GM12878 (cell line): ENCODE measurements at regions of chr7 and their contacts with region 1.

Region 1: DNA sequence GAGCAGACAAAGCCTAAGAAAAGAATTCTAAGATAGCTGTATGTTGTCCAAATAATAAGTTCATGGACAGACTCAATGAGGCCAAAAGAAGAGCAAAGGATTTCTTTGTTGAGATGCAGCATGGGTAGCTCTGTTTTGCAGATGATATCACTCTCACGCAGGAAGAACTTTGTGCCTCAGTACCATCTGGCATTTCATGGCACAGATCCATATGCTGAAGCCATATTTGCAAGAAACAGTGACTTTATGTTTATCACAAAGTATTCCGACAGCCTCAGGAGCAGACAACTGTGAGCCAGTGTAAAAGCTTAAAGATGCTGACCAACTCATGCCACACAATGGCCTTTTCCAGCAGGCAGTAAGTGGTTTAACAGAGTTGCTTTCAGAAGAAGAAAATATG is 45.5 kb upstream of the RNF148 start:
- DNase-seq: no peak
- ATAC-seq: no peak
- H3K4me3 ChIP-seq: no peak overlapping the region
- H3K27ac ChIP-seq: no peak overlapping the region
- H3K4me1 ChIP-seq: no peaks in the 10 kb centered on the region
- H3K27me3 ChIP-seq: no peaks in the 10 kb centered on the region
- CTCF ChIP-seq: no peak
- EP300 ChIP-seq: no peak
- POLR2A ChIP-seq: no peak
- RAD21 ChIP-seq: no peak

Region 2: DNA sequence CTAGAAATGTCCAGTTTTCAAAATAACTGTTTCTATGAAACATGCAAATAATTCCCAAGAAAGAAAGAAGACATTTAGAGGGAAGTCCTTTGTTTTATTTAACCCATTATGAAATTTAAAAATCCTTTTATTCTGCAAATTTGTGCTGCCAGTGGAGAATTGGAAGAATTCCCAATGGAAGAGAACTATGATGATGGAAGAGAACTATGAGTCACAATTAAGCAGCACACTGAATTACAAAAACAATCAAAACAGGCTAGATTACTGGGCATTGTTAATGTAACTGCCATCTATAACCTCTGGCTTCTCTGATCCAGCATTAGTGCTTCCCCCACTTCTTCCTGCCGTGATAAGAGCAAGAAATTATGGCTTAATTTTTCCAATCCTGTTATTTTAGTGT is 317.5 kb before region 1 on chr7:
- CTCF ChIA-PET with region 1: no interaction called
- POLR2A ChIA-PET with region 1: no interaction called
- RAD21 ChIA-PET with region 1: no interaction called
- SMC1A ChIA-PET with region 1: no interaction called
- in situ Hi-C with region 1: no loop called
- intact Hi-C with region 1: no loop called
- DNase-seq: no peak
- ATAC-seq: no peak
- H3K4me3 ChIP-seq: no peak overlapping the region
- H3K27ac ChIP-seq: no peak overlapping the region
- H3K4me1 ChIP-seq: no peaks in the 10 kb centered on the region
- H3K27me3 ChIP-seq: no peaks in the 10 kb centered on the region
- CTCF ChIP-seq: no peak
- EP300 ChIP-seq: no peak
- POLR2A ChIP-seq: no peak
- RAD21 ChIP-seq: no peak

Region 3: DNA sequence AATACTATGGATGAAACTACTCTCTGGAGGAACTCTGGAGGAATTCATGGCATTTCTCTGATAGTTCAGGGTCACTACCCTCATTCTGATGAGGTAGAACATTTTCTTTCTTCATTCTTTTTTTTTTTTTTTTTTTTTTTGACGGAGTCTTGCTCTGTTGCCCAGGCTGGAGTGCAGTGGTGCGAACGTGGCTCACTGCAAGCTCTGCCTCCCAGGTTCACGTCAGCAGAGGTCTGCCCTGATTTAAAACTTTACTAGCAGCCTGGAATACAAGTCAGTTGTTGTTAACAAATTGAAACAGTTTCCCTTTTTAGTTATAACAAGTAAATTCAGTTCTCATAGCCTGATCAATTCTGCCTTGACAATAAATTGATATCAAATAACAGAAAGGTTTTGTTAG is 267.1 kb before region 1 on chr7:
- CTCF ChIA-PET with region 1: no interaction called
- POLR2A ChIA-PET with region 1: no interaction called
- RAD21 ChIA-PET with region 1: no interaction called
- SMC1A ChIA-PET with region 1: no interaction called
- in situ Hi-C with region 1: no loop called
- intact Hi-C with region 1: no loop called
- DNase-seq: no peak
- ATAC-seq: no peak
- H3K4me3 ChIP-seq: no peak overlapping the region
- H3K27ac ChIP-seq: no peak overlapping the region
- H3K4me1 ChIP-seq: no peaks in the 10 kb centered on the region
- H3K27me3 ChIP-seq: no peaks in the 10 kb centered on the region
- CTCF ChIP-seq: no peak
- EP300 ChIP-seq: no peak
- POLR2A ChIP-seq: no peak
- RAD21 ChIP-seq: no peak

Region 4: GRCh38 chr7:122736183-122736582 is 12.0 kb before region 1 on chr7:
- CTCF ChIA-PET with region 1: interaction called, 11 read pairs
- POLR2A ChIA-PET with region 1: interaction called, 6 read pairs
- RAD21 ChIA-PET with region 1: interaction called, 7 read pairs
- SMC1A ChIA-PET with region 1: interaction called, 85 read pairs
- in situ Hi-C with region 1: no loop called
- intact Hi-C with region 1: no loop called
- DNase-seq: no peak
- ATAC-seq: peak; percentile 83
- H3K4me3 ChIP-seq: no peak overlapping the region
- H3K27ac ChIP-seq: no peak overlapping the region
- H3K4me1 ChIP-seq: no peaks in the 10 kb centered on the region
- H3K27me3 ChIP-seq: no peaks in the 10 kb centered on the region
- CTCF ChIP-seq: no peak
- EP300 ChIP-seq: 0 out of 4 replicates have a peak, but pooled peaks of 1 of the 2 experiments have one; percentile 5
- POLR2A ChIP-seq: no peak
- RAD21 ChIP-seq: no peak

Region 5: DNA sequence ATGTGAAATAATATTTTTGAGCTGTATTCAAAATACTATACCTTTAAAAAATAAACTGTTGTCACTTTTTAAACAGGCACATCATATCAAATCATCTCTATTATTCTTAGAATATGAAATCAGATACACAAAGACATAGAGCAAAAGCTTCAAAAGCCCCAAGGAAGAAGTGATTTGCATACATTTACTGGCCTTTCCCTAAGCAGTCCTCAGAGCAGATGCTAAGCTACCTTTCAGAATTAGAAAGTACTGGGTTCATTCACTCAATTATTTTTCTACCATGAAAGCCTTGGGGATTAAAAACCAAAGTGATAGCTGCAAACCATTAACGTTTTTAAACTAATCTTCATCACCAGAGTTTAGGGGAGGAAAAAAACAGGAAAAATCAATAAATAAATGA is 10.3 kb after region 1 on chr7:
- CTCF ChIA-PET with region 1: interaction called, 13 read pairs
- POLR2A ChIA-PET with region 1: interaction called, 4 read pairs
- RAD21 ChIA-PET with region 1: interaction called, 6 read pairs
- SMC1A ChIA-PET with region 1: interaction called, 29 read pairs
- in situ Hi-C with region 1: no loop called
- intact Hi-C with region 1: no loop called
- DNase-seq: no peak
- ATAC-seq: peak; percentile 59
- H3K4me3 ChIP-seq: no peak overlapping the region
- H3K27ac ChIP-seq: no peak overlapping the region
- H3K4me1 ChIP-seq: no peaks in the 10 kb centered on the region
- H3K27me3 ChIP-seq: no peaks in the 10 kb centered on the region
- CTCF ChIP-seq: no peak
- EP300 ChIP-seq: no peak
- POLR2A ChIP-seq: no peak
- RAD21 ChIP-seq: no peak

Region 6: DNA sequence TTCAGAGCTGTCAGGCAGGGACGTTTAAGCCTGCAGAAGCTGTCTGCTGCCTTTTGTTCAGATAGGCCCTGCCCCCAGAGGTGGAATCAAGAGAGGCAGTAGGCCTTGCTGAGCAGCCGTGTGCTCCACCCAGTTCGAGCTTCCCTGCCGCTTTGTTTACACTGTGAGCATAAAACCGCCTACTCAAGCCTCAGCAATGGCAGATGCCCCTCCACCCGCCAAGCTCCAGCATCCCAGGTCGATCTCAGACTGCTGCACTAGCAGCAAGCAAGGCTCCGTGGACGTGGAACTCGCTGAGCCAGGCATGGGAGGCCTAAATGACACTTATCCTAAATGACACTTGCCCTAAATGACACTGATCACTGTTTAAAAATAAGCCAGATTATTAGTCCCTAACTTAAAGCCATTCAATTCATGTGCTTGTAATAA is 846.6 kb after region 1 on chr7:
- CTCF ChIA-PET with region 1: no interaction called
- POLR2A ChIA-PET with region 1: no interaction called
- RAD21 ChIA-PET with region 1: no interaction called
- SMC1A ChIA-PET with region 1: no interaction called
- in situ Hi-C with region 1: no loop called
- intact Hi-C with region 1: no loop called
- DNase-seq: no peak
- ATAC-seq: no peak
- H3K4me3 ChIP-seq: no peak overlapping the region
- H3K27ac ChIP-seq: no peak overlapping the region
- H3K4me1 ChIP-seq: no peaks in the 10 kb centered on the region
- H3K27me3 ChIP-seq: no peaks in the 10 kb centered on the region; a peak in 1 of 4 replicates
- CTCF ChIP-seq: no peak
- EP300 ChIP-seq: no peak
- POLR2A ChIP-seq: no peak
- RAD21 ChIP-seq: no peak